ENCODE measurements at regions of chr1 and their contacts with region 1.

Region 1: DNA sequence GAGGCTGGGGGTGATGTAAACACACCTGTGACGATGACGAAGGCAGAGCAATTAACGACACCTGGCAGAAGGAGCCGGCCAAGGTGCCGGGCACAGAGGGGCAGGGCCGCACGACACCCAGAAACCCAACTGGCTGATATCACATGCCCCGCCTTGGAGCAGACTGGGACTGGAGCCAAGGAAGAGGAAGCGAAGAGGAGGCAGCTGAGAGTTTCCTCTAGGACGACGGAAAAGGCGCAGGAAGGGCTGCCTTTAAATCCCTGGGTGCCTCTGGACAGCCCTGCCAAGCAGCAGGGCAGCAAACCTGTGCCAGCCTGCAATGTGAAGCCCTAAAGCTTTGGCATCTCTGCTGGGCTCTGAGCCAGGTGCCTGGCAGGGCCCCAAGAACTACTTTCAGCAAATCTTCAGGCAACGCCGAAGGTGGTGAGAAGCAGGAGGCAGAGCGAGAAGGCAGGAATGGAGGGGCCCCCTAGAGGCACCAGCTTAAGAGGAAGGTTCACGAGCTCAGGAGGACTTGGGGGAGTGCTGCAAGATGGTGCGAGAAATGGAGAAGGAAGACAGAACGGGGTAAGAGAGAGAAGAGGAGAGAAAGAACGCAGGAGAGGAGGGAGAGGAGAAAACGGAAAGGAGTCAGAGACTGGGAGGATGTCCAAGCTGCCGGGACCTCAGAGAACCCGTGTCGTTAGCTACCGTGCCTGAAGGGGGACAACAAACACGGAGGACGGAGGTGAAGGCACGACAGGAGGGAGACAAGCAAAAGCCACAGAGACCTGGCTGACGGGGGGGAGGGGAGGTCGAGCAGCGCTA is 25.3 kb upstream of the PEF1 start:
- DNase-seq: peak; percentile 64 to 82
- ATAC-seq: peak; percentile 71 to 83
- H3K4me3 ChIP-seq: peak overlapping the region; percentile 29 to 50 (median 48)
- H3K27ac ChIP-seq: peak overlapping the region; percentile 53 to 69 (median 60)
- H3K4me1 ChIP-seq: peaks cover 29 to 36% of the 10 kb centered on the region in 2 donors
- H3K27me3 ChIP-seq: no peaks in the 10 kb centered on the region
- CTCF ChIP-seq: no peak
- POLR2A ChIP-seq: no peak

Region 2: GRCh38 chr1:31701137-31701736 is 31.2 kb after region 1 on chr1:
- in situ Hi-C with region 1: no loop called
- intact Hi-C with region 1: loop called (anchors 2 kb)
- DNase-seq: peak; percentile 71 to 86
- ATAC-seq: peak; percentile 45 to 65
- H3K4me3 ChIP-seq: no peak overlapping the region
- H3K27ac ChIP-seq: peak overlapping the region; percentile 58 to 70 (median 66)
- H3K4me1 ChIP-seq: peaks cover 14 to 36% of the 10 kb centered on the region in 2 donors
- H3K27me3 ChIP-seq: no peaks in the 10 kb centered on the region
- CTCF ChIP-seq: no peak
- POLR2A ChIP-seq: no peak

Region 3: GRCh38 chr1:31781756-31782371 is 111.9 kb after region 1 on chr1:
- in situ Hi-C with region 1: loop called in 3 of 4 experiments (anchors 5 to 10 kb)
- intact Hi-C with region 1: no loop called
- DNase-seq: no peak
- ATAC-seq: no peak
- H3K4me3 ChIP-seq: no peak overlapping the region
- H3K27ac ChIP-seq: no peak overlapping the region
- H3K4me1 ChIP-seq: no peaks in the 10 kb centered on the region
- H3K27me3 ChIP-seq: peaks cover 0 to 3% (median 0%) of the 10 kb centered on the region in 3 donors
- CTCF ChIP-seq: no peak
- POLR2A ChIP-seq: no peak

Region 4: DNA sequence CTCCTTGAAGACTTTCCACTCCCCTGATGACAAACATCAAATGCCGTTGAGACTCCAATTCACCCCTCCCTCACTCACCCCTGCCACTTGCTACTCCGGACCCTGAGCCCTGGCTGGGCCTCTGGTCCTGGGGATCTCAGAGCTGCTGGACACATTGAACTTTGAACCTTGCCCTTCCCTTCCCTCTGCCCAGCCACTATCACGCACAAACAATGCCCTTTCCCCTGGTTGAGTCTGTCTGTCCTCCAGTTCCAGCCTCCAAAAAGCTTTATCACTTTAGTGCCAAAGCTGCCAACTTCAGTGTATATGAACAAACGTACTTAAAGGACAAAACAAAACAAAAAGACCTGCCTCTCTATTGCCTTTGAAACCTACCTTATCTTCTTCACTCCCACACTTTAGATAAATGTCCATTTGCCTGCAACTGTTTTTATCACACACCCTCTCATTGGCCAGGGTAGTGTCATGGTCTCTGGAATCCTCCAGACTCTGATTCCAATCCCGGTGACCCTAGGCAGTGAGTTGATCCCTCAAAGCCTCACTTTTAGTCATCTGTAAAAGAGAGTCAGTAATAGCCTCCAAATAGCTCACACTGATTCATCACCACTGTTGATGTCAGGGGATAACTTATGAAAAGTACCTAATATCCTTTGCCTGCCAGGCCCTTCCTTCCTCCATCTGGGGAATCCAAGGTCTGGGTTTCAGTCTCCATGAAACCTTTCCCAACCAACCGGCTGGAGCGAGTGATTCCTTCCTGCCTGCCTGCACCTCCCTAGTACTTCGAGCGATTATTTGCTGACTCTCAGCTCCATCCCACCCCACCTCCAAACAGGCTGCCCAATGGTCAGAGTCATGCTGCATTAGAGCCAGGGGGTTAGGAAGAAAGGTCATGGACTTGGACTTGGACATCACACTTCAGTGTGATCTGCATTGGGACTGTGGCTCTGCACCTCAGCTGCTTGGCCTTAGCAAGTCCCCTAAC is 161.7 kb after region 1 on chr1:
- in situ Hi-C with region 1: no loop called
- intact Hi-C with region 1: no loop called
- DNase-seq: no peak
- ATAC-seq: no peak
- H3K4me3 ChIP-seq: no peak overlapping the region
- H3K27ac ChIP-seq: no peak overlapping the region
- H3K4me1 ChIP-seq: no peaks in the 10 kb centered on the region
- H3K27me3 ChIP-seq: no peaks in the 10 kb centered on the region
- CTCF ChIP-seq: no peak
- POLR2A ChIP-seq: no peak

Measured in gastrocnemius medialis (tissue), 4 donors.